HepG2 (cell line): ENCODE measurements at regions of chr4 and their contacts with region 1.

Region 1: DNA sequence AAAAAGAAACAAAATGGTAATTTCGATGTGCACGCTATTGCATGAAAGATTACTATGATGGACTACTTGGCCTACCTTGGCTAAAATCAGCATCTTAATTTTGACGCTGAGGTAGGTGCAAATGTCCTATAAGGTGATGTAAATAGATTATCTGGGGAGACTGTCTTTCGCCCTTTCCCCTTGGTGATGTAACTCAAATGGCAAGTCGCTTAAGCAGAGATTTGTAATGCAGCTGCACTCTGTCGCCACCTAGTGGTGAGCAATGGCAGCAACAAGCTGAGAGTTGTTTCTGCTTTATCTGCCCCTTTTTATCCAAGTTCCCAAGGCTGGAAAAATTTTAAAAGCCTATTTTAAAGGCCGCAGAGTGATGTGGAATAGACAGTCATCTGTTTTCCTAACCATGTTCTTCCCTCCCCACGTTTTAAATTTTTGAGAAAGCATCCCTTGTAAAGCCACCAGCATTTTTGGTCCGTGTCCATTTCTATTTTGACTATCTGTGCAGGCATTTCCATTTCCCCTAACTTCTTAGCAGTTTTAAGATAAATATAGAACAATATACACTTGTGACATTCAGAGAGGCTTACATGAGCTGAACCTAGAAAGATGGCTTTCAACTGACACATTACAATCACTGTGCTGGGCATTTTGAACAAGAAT is 62.4 kb upstream of the PDLIM3 start:
- DNase-seq: peak; percentile 68
- ATAC-seq: peak; percentile 67
- H3K4me3 ChIP-seq: no peak overlapping the region
- H3K27ac ChIP-seq: no peak overlapping the region
- H3K4me1 ChIP-seq: peaks cover 2% of the 10 kb centered on the region; the same call in 1 of the 2 replicates
- H3K27me3 ChIP-seq: no peaks in the 10 kb centered on the region
- CTCF ChIP-seq: peak; percentile 90
- EP300 ChIP-seq: no peak
- POLR2A ChIP-seq: no peak
- RAD21 ChIP-seq: peak; percentile 93

Region 2: DNA sequence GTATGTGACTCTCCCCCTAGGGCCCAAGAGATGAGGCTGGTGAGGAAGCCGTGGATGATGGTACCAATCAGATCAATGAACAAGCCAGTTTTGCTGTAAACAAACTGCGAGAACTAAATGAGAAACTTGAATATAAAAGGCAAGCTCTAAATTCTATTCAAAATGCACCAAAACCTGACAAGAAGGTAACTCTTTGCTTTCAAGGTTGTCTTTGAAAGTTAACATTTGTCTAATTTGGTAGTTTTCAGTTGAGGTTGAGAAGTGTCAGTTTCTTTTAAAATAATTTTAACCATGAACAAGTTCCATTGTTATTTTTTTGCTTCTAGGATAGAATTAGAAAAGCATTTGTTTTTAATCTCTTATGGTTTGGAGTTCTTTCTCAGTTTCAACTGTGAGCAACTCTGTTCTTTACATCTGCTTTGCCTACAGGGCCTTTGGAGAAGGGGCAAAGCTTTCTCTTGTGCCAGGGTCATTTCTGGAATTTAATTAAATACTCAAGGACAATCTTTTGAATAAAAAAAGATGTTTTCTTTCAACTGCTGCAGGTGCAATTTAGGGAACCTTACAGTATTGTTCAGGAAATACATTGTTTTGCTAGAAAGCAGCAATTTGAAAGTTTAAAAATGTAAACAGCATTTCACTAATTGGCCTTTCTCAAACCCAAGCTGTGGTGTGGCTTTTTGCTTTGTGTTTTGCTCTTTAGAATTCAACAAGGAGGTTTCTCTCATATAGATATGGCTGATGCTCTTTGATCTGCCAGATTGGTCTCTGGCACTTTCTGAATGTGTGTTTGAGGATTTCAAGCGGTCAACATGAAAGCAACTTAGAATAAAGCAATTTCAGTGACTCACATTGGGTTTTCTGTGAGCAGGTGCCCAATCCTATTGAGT is 264.8 kb before region 1 on chr4:
- CTCF ChIA-PET with region 1: no interaction called
- POLR2A ChIA-PET with region 1: no interaction called
- in situ Hi-C with region 1: no loop called
- intact Hi-C with region 1: no loop called
- DNase-seq: peak; percentile 92
- ATAC-seq: peak; percentile 92
- H3K4me3 ChIP-seq: no peak overlapping the region
- H3K27ac ChIP-seq: peak overlapping the region; percentile 62
- H3K4me1 ChIP-seq: peaks cover 45% of the 10 kb centered on the region
- H3K27me3 ChIP-seq: no peaks in the 10 kb centered on the region
- CTCF ChIP-seq: no peak
- EP300 ChIP-seq: peak in 1 of 2 experiments; percentile 82; a peak in 2 of 4 replicates
- POLR2A ChIP-seq: no peak
- RAD21 ChIP-seq: no peak

Region 3: GRCh38 chr4:185471235-185472102 is 126.2 kb before region 1 on chr4 and contains the start of gene CCDC110:
- CTCF ChIA-PET with region 1: interaction called, 31 read pairs
- POLR2A ChIA-PET with region 1: no interaction called
- in situ Hi-C with region 1: loop called (anchors 5 kb)
- intact Hi-C with region 1: loop called (anchors 1 kb)
- DNase-seq: peak; percentile 50
- ATAC-seq: peak; percentile 96
- H3K4me3 ChIP-seq: peak within 1 kb of the TSS; percentile 61 to 81 (median 73)
- H3K27ac ChIP-seq: no peak within 1 kb of the TSS
- H3K4me1 ChIP-seq: peaks cover 12% of the 10 kb centered on the region
- H3K27me3 ChIP-seq: peaks cover 0 to 54% of the 10 kb centered on the region in 2 experiments; a peak in 3 of 5 replicates
- CTCF ChIP-seq: peak; percentile 81
- EP300 ChIP-seq: no peak
- POLR2A ChIP-seq: no peak
- RAD21 ChIP-seq: peak; percentile 93
- total RNA-seq, gene CCDC110: not detected in 2 replicates

Region 4: GRCh38 chr4:185504098-185505047 is 93.3 kb before region 1 on chr4:
- CTCF ChIA-PET with region 1: interaction called, 4 read pairs
- POLR2A ChIA-PET with region 1: no interaction called
- in situ Hi-C with region 1: no loop called
- intact Hi-C with region 1: loop called (anchors 1 kb)
- DNase-seq: peak; percentile 95
- ATAC-seq: peak; percentile 97
- H3K4me3 ChIP-seq: peak overlapping the region; percentile 48 to 57 (median 53)
- H3K27ac ChIP-seq: peak overlapping the region; percentile 70
- H3K4me1 ChIP-seq: peaks cover 56% of the 10 kb centered on the region
- H3K27me3 ChIP-seq: no peaks in the 10 kb centered on the region
- CTCF ChIP-seq: peak; percentile 17; the same call in 1 of the 2 replicates
- EP300 ChIP-seq: peak; percentile 60 to 80
- POLR2A ChIP-seq: no peak
- RAD21 ChIP-seq: no peak; the same call in 1 of the 2 replicates

Region 5: GRCh38 chr4:185513489-185514181 is 84.0 kb before region 1 on chr4:
- CTCF ChIA-PET with region 1: no interaction called
- POLR2A ChIA-PET with region 1: no interaction called
- in situ Hi-C with region 1: loop called (anchors 10 kb)
- intact Hi-C with region 1: no loop called
- DNase-seq: peak; percentile 73
- ATAC-seq: peak; percentile 100
- H3K4me3 ChIP-seq: peak overlapping the region in 2 of 3 experiments; percentile 19 to 24; a peak in 4 of 6 replicates
- H3K27ac ChIP-seq: peak overlapping the region; percentile 59
- H3K4me1 ChIP-seq: peaks cover 23% of the 10 kb centered on the region
- H3K27me3 ChIP-seq: no peaks in the 10 kb centered on the region
- CTCF ChIP-seq: no peak
- EP300 ChIP-seq: no peak; a peak in 1 of 4 replicates
- POLR2A ChIP-seq: no peak
- RAD21 ChIP-seq: no peak